Posterior cingulate gyrus (tissue), 11 donors: ENCODE measurements at regions of chr5 and their contacts with region 1.

Region 1: DNA sequence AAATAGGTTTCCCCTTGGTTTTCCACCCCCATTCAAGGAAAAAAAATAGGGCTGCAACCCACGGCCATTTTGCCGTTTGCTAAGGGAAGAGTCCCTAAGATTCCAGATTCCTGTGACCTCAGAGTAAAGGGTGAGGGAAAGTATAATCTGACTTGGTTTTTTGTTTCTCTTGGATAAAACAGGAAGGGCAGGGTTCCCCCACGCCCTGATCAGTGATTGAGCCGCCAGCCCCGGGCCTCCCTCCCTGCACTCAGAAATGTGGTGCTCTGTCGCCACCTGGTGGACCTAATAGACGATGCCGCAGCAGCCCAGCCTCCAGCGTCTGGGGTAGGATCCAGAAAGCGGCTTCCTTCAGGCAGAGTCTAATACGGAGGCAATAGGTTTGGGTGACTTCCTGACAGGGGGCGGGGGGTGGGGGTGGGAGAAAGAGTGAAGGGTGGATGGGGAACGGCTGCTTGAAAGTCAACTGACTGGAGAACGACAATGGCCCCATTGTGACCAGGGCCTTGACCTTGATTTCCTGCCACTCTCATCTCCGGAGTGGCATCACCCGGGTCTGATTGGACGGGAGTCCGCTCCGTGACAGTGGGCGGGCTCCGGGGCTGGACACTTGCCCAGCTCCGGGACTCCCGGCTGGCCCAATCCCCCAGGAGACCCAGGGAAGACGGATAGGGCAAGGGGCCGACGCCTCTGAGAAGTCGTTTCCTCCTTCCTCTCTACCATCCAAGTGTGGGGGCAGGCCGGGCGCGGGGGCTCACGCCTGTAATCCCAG is 17.8 kb upstream of the CYSTM1 start:
- DNase-seq: peak; percentile 86 to 98 (median 90)

Region 2: GRCh38 chr5:139863855-139864558 is 293.2 kb before region 1 on chr5:
- intact Hi-C with region 1: loop called (anchors 5 kb)
- DNase-seq: peak; percentile 51 to 95 (median 76)

Region 3: DNA sequence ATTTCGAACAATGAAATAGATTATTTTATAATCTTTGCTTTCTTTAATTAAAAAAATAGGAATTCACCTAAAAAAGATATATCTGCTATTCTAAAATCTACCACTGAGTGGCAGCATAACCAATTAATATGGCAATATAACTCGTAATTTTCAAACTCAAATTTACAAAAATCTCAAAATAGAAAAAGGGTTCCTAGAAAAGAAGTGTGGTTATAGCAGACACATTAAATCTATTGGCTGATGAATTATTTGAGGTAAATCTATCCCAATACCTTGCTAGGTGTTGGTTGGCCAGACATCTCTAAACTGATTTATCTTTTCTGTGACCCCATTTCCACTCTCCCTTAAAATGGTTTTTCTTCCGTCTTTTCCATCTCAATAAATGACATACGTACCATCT is 83.9 kb before region 1 on chr5:
- intact Hi-C with region 1: loop called (anchors 1 kb)
- DNase-seq: no peak